CD8-positive, alpha-beta memory T cell (primary cell): ENCODE measurements at regions of chr7 and their contacts with region 1.

Region 1: GRCh38 chr7:143240291-143241168 is 18.7 kb downstream of the TAS2R40 start:
- DNase-seq: peak; percentile 44 to 81 (median 68)
- H3K4me3 ChIP-seq: no peak overlapping the region
- H3K4me3 Mint-ChIP-seq: peak overlapping the region in 2 of 7 donors; percentile 36 to 41
- H3K27ac ChIP-seq: no peak overlapping the region
- H3K27ac Mint-ChIP-seq: peak overlapping the region in 4 of 8 donors; percentile 36 to 61 (median 46)
- H3K4me1 ChIP-seq: peaks cover 21% of the 10 kb centered on the region
- H3K4me1 Mint-ChIP-seq: peaks cover 27 to 39% (median 34%) of the 10 kb centered on the region in 3 donors
- H3K27me3 ChIP-seq: no peaks in the 10 kb centered on the region
- H3K27me3 Mint-ChIP-seq: peaks cover 14 to 22% of the 10 kb centered on the region in 2 donors

Region 2: DNA sequence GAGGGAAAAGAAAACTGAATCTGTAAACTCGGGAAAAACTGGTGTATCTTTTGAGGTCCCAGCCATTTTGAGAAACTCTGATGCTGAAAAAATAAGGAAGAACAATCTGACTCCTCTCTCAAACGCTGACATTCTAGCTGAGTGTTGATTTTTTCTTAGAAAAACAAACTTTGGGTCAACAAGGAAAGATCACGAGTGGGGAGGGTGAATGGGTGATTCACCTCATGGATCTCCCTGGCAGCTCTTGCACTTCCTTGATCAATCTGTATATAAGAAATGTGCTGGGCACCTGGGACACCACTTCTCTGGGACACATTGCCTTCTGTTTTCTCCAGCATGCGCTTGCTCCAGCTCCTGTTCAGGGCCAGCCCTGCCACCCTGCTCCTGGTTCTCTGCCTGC is 108.7 kb before region 1 on chr7 and contains the start of gene PIP:
- CTCF ChIA-PET with region 1: no interaction called
- POLR2A ChIA-PET with region 1: no interaction called
- DNase-seq: no peak
- H3K4me3 ChIP-seq: no peak within 1 kb of the TSS
- H3K4me3 Mint-ChIP-seq: no peak within 1 kb of the TSS
- H3K27ac ChIP-seq: no peak within 1 kb of the TSS
- H3K27ac Mint-ChIP-seq: no peak within 1 kb of the TSS
- H3K4me1 ChIP-seq: no peaks in the 10 kb centered on the region
- H3K4me1 Mint-ChIP-seq: no peaks in the 10 kb centered on the region
- H3K27me3 ChIP-seq: no peaks in the 10 kb centered on the region
- H3K27me3 Mint-ChIP-seq: peaks cover 3 to 63% of the 10 kb centered on the region in 2 donors
- total RNA-seq, gene PIP: not detected

Region 3: DNA sequence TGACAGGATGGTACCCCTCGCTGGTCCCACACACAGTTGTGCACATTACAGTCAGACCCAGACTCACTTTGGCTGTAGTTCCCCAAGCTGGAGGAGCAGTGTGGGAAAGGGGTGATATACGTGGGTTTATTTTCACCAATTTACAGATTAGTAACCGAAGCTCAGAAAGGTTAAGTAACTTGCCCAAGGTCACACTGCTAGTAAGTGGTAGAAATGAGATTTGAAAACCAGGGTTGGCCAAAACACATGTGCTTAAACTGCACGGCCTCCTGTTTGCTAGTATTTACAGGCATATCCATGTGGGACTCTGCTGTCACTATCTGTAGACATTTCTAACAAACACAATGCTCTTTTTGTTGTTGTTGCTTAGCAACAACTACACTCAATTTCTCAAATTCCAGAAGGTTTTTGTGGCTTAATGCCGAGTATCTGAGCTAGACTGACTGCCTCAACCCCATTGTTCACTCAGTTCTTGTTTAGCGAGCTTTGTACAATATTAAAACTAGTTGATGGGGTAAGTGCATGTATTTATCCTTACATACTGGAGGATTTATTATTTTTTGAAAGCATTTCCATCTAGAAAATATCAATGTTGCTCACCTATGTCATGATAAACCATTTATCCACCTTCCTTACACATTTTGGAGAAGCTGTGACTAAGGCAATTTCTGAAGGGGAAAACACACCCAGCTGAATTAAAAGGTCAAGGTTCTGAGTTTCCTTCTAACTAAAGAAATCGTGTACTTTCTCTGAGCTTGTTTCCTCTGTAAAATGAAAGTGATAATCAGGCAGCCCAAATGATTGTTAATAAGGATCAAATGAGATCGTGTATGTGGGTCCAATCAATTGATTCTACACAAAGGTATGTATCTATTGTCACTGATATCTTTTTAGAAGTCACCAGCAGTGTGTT is 38.9 kb after region 1 on chr7:
- CTCF ChIA-PET with region 1: interaction called, 27 read pairs
- POLR2A ChIA-PET with region 1: no interaction called
- DNase-seq: peak in 2 of 5 donors; percentile 26 to 41
- H3K4me3 ChIP-seq: peak overlapping the region; percentile 8
- H3K4me3 Mint-ChIP-seq: peak overlapping the region; percentile 34 to 85 (median 73)
- H3K27ac ChIP-seq: peak overlapping the region; percentile 33
- H3K27ac Mint-ChIP-seq: peak overlapping the region; percentile 82 to 96 (median 90)
- H3K4me1 ChIP-seq: peaks cover 27% of the 10 kb centered on the region
- H3K4me1 Mint-ChIP-seq: peaks cover 33 to 43% (median 34%) of the 10 kb centered on the region in 3 donors
- H3K27me3 ChIP-seq: no peaks in the 10 kb centered on the region
- H3K27me3 Mint-ChIP-seq: no peaks in the 10 kb centered on the region

Region 4: GRCh38 chr7:143305423-143306070 is 65.0 kb after region 1 on chr7:
- CTCF ChIA-PET with region 1: interaction called, 103 read pairs
- POLR2A ChIA-PET with region 1: interaction called, 9 read pairs
- DNase-seq: peak; percentile 40 to 73 (median 44)
- H3K4me3 ChIP-seq: no peak overlapping the region
- H3K4me3 Mint-ChIP-seq: peak overlapping the region in 1 of 7 donors; percentile 6
- H3K27ac ChIP-seq: no peak overlapping the region
- H3K27ac Mint-ChIP-seq: peak overlapping the region in 6 of 8 donors; percentile 1 to 84 (median 38)
- H3K4me1 ChIP-seq: peaks cover 6% of the 10 kb centered on the region
- H3K4me1 Mint-ChIP-seq: peaks cover 25 to 50% (median 33%) of the 10 kb centered on the region in 3 donors
- H3K27me3 ChIP-seq: no peaks in the 10 kb centered on the region
- H3K27me3 Mint-ChIP-seq: no peaks in the 10 kb centered on the region

Region 5: GRCh38 chr7:143362131-143363015 is 121.8 kb after region 1 on chr7 and contains the start of gene FAM131B:
- CTCF ChIA-PET with region 1: interaction called, 12 read pairs
- POLR2A ChIA-PET with region 1: no interaction called
- DNase-seq: peak in 3 of 5 donors; percentile 34 to 64 (median 38)
- H3K4me3 ChIP-seq: peak within 1 kb of the TSS; percentile 47
- H3K4me3 Mint-ChIP-seq: peak within 1 kb of the TSS; percentile 74 to 96 (median 85)
- H3K27ac ChIP-seq: no peak within 1 kb of the TSS
- H3K27ac Mint-ChIP-seq: peak within 1 kb of the TSS in 6 of 8 donors; percentile 37 to 91 (median 68)
- H3K4me1 ChIP-seq: peaks cover 7% of the 10 kb centered on the region
- H3K4me1 Mint-ChIP-seq: peaks cover 10 to 16% (median 11%) of the 10 kb centered on the region in 3 donors
- H3K27me3 ChIP-seq: peaks cover 25% of the 10 kb centered on the region
- H3K27me3 Mint-ChIP-seq: peaks cover 14 to 25% of the 10 kb centered on the region in 2 donors
- total RNA-seq, gene FAM131B: 2.4 to 2.8 TPM

Region 6: GRCh38 chr7:143408686-143409561 is 168.4 kb after region 1 on chr7 and contains the start of gene EPHA1:
- CTCF ChIA-PET with region 1: interaction called, 67 read pairs
- POLR2A ChIA-PET with region 1: interaction called, 4 read pairs
- DNase-seq: peak; percentile 28 to 64 (median 45)
- H3K4me3 ChIP-seq: peak within 1 kb of the TSS; percentile 81
- H3K4me3 Mint-ChIP-seq: peak within 1 kb of the TSS; percentile 78 to 97 (median 89)
- H3K27ac ChIP-seq: no peak within 1 kb of the TSS
- H3K27ac Mint-ChIP-seq: peak within 1 kb of the TSS; percentile 63 to 99 (median 94)
- H3K4me1 ChIP-seq: peaks cover 57% of the 10 kb centered on the region
- H3K4me1 Mint-ChIP-seq: peaks cover 41 to 60% (median 53%) of the 10 kb centered on the region in 3 donors
- H3K27me3 ChIP-seq: no peaks in the 10 kb centered on the region
- H3K27me3 Mint-ChIP-seq: peaks cover 8 to 21% of the 10 kb centered on the region in 2 donors
- total RNA-seq, gene EPHA1: 2.8 to 3.1 TPM